Activated naive CD8-positive, alpha-beta T cell treated with anti-CD3 and anti-CD28 coated beads, Interleukin-2, amount 10 ng/mL, durations not matched to agents 7 days and 5 days (primary cell): ENCODE measurements at regions of chr10 and their contacts with region 1.

Region 1: GRCh38 chr10:91163269-91163868 is 57.1 kb upstream of the PCGF5 start:
- DNase-seq: peak; percentile 85
- ATAC-seq: peak; percentile 69
- H3K4me3 Mint-ChIP-seq: peak overlapping the region; percentile 93
- H3K27ac Mint-ChIP-seq: peak overlapping the region; percentile 92
- H3K4me1 Mint-ChIP-seq: peaks cover 26% of the 10 kb centered on the region
- H3K27me3 Mint-ChIP-seq: no peaks in the 10 kb centered on the region

Region 2: GRCh38 chr10:91111060-91111459 is 52.3 kb before region 1 on chr10:
- POLR2A ChIA-PET with region 1: no interaction called
- DNase-seq: no peak
- ATAC-seq: no peak
- H3K4me3 Mint-ChIP-seq: no peak overlapping the region
- H3K27ac Mint-ChIP-seq: no peak overlapping the region
- H3K4me1 Mint-ChIP-seq: no peaks in the 10 kb centered on the region
- H3K27me3 Mint-ChIP-seq: peaks cover 2% of the 10 kb centered on the region

Region 3: GRCh38 chr10:91137822-91138221 is 25.5 kb before region 1 on chr10:
- POLR2A ChIA-PET with region 1: no interaction called
- DNase-seq: no peak
- ATAC-seq: no peak
- H3K4me3 Mint-ChIP-seq: no peak overlapping the region
- H3K27ac Mint-ChIP-seq: no peak overlapping the region
- H3K4me1 Mint-ChIP-seq: no peaks in the 10 kb centered on the region
- H3K27me3 Mint-ChIP-seq: peaks cover 12% of the 10 kb centered on the region

Region 4: DNA sequence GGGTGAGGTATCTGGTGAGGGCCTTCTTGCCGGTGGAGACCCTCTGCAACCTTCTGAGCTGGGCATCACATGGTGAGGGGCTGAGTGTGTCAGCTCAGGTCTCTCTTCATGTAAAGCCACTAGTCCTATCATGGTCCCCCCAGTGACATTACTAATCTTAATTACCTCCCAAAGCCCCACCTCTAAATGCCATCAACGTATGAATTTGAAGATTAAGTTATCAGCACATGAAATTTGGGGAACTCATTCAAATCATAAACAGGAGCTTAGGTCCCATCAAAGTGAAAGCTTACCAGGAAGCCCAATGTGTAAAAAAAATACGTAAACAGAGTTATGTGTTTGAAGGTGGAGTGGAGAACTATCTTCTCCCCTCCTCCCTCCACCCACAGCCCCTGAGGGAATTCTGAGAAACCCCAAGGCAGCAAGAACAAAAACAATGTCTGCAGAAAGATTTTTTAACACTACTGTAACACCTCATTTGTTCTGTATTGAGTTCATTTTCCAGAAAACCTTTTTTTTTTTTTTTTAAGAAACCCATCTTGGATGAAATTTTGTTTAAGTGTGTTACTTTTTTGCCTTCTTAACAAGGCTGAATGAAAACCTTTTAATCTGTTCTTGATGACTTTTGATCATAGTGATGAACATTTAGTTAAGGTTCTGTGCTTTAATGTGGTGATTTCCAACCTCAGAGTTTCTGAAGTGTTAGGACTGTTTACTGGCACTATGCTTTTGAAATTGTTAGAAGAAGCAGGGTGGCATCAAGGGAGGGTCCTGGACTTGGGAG is 38.0 kb after region 1 on chr10:
- POLR2A ChIA-PET with region 1: interaction called, 51 read pairs
- DNase-seq: peak; percentile 39
- ATAC-seq: peak; percentile 61
- H3K4me3 Mint-ChIP-seq: peak overlapping the region; percentile 76
- H3K27ac Mint-ChIP-seq: peak overlapping the region; percentile 92
- H3K4me1 Mint-ChIP-seq: peaks cover 58% of the 10 kb centered on the region
- H3K27me3 Mint-ChIP-seq: no peaks in the 10 kb centered on the region

Region 5: GRCh38 chr10:91220194-91220953 is 57.0 kb after region 1 on chr10 and contains the start of gene PCGF5:
- POLR2A ChIA-PET with region 1: interaction called, 36 read pairs
- DNase-seq: peak; percentile 98
- ATAC-seq: peak; percentile 100
- H3K4me3 Mint-ChIP-seq: peak within 1 kb of the TSS; percentile 95
- H3K27ac Mint-ChIP-seq: peak within 1 kb of the TSS; percentile 90
- H3K4me1 Mint-ChIP-seq: peaks cover 35% of the 10 kb centered on the region
- H3K27me3 Mint-ChIP-seq: no peaks in the 10 kb centered on the region
- total RNA-seq, gene PCGF5: 51.6 to 52.5 TPM

Region 6: DNA sequence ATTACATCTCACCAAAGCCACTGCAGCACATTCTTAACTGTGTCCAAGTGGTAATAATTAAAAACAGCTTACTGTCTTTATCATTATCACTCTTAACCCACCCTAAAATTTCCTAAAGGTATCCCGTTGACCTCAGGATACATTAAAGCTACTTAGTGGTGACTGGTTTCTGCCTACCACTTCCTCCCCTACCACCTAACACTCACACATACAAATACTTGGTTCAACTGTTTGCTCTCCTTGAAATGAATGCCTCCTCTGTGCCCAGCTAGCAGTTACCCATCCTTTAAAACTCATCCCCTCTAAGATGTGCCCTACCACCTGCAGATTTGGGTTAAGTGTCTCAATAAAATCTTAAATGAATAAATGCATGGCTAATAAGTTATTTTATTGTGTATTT is 64.2 kb after region 1 on chr10:
- POLR2A ChIA-PET with region 1: interaction called, 11 read pairs
- DNase-seq: no peak
- ATAC-seq: peak; percentile 63
- H3K4me3 Mint-ChIP-seq: peak overlapping the region; percentile 50
- H3K27ac Mint-ChIP-seq: peak overlapping the region; percentile 67
- H3K4me1 Mint-ChIP-seq: peaks cover 44% of the 10 kb centered on the region
- H3K27me3 Mint-ChIP-seq: no peaks in the 10 kb centered on the region

Region 7: GRCh38 chr10:91251430-91252056 is 88.2 kb after region 1 on chr10:
- POLR2A ChIA-PET with region 1: interaction called, 19 read pairs
- DNase-seq: no peak
- ATAC-seq: peak; percentile 29
- H3K4me3 Mint-ChIP-seq: no peak overlapping the region
- H3K27ac Mint-ChIP-seq: no peak overlapping the region
- H3K4me1 Mint-ChIP-seq: peaks cover 5% of the 10 kb centered on the region
- H3K27me3 Mint-ChIP-seq: no peaks in the 10 kb centered on the region